H1 (cell line): ENCODE measurements at regions of chr3 and their contacts with region 1.

Region 1: GRCh38 chr3:9067352-9067975 is 104.2 kb upstream of the RAD18 start:
- DNase-seq: peak; percentile 31 to 65
- H3K4me3 ChIP-seq: no peak overlapping the region
- H3K27ac ChIP-seq: no peak overlapping the region
- H3K4me1 ChIP-seq: no peaks in the 10 kb centered on the region
- H3K27me3 ChIP-seq: no peaks in the 10 kb centered on the region
- CTCF ChIP-seq: peak; percentile 32 to 96 (median 94)
- EP300 ChIP-seq: no peak
- POLR2A ChIP-seq: no peak
- RAD21 ChIP-seq: peak; percentile 97

Region 2: DNA sequence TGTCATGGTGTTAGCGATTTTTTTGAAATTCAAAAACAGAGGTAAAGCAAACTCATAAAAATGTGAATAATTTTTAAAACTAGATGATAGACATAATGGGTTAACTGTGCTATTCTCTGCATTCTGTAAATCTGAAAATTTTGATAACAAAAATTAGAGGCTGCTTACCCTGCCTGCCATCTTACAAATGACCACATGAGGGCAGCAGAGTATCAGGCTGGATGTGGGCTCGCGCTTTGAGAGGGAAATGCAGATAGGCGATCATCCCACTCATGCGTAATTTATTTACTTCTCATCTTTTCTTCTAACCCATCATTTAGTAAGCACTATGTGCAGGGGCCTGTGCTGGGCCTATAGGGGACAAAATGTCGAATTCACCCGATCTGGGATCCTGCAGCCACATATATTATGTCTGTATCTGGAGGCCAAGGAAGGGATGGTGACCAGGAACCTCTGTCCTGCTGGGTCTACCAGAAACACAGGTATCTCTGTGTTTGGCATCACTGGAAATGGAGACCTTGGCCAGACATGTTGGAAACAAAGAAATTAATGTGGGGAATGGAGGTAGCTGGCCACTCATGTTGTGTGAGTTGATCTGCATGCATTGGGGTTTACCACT is 96.4 kb before region 1 on chr3:
- CTCF ChIA-PET with region 1: interaction called, 12 read pairs
- POLR2A ChIA-PET with region 1: no interaction called
- DNase-seq: peak in 1 of 2 experiments; percentile 83
- H3K4me3 ChIP-seq: no peak overlapping the region
- H3K27ac ChIP-seq: no peak overlapping the region
- H3K4me1 ChIP-seq: peaks cover 0 to 6% (median 3%) of the 10 kb centered on the region in 4 experiments; a peak in 4 of 7 replicates
- H3K27me3 ChIP-seq: peaks cover 0 to 2% (median 0%) of the 10 kb centered on the region in 4 experiments; a peak in 1 of 7 replicates
- CTCF ChIP-seq: peak; percentile 72 to 87 (median 83)
- EP300 ChIP-seq: no peak
- POLR2A ChIP-seq: no peak
- RAD21 ChIP-seq: peak; percentile 98

Region 3: DNA sequence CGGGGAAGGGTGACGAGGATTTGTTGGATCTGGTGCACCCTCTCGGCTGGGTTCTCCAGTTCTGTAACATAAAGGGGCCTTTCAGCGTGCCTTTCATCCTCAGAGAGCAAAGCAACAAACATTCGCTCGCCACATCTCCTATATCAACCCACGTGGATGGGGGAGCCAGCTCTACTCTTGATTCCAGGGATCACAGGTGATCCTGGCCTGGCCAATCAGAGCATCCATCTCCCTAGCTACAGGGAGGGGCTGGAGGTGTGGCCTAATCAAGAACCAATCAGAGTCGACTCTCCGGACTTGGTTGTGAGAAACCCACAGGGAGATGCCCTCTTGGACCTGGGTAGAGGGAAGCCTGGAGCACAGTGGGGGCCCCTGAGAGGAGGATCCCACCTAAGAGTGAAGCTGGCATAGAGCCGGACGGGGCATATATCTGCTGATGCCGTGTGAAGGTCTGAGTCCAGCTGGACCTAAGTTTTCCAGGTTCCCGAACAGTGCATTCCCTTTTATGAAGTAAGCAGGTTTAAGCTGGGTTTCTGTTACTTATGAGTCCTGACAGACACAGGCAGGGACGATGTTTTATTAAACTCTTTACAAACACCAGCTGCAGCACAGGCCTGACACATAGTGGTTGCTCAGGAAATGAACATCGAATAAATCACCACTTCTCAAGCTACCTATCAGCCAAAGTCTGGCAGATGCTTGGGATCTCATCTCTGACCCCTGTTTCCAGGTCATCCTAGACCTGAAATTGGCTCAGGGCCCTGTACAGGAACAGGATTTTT is 53.5 kb before region 1 on chr3:
- CTCF ChIA-PET with region 1: no interaction called
- POLR2A ChIA-PET with region 1: no interaction called
- DNase-seq: no peak
- H3K4me3 ChIP-seq: no peak overlapping the region
- H3K27ac ChIP-seq: no peak overlapping the region
- H3K4me1 ChIP-seq: no peaks in the 10 kb centered on the region
- H3K27me3 ChIP-seq: no peaks in the 10 kb centered on the region
- CTCF ChIP-seq: peak in 1 of 3 experiments; percentile 5; a peak in 1 of 4 replicates
- EP300 ChIP-seq: no peak
- POLR2A ChIP-seq: no peak
- RAD21 ChIP-seq: peak; percentile 28 to 41

Region 4: DNA sequence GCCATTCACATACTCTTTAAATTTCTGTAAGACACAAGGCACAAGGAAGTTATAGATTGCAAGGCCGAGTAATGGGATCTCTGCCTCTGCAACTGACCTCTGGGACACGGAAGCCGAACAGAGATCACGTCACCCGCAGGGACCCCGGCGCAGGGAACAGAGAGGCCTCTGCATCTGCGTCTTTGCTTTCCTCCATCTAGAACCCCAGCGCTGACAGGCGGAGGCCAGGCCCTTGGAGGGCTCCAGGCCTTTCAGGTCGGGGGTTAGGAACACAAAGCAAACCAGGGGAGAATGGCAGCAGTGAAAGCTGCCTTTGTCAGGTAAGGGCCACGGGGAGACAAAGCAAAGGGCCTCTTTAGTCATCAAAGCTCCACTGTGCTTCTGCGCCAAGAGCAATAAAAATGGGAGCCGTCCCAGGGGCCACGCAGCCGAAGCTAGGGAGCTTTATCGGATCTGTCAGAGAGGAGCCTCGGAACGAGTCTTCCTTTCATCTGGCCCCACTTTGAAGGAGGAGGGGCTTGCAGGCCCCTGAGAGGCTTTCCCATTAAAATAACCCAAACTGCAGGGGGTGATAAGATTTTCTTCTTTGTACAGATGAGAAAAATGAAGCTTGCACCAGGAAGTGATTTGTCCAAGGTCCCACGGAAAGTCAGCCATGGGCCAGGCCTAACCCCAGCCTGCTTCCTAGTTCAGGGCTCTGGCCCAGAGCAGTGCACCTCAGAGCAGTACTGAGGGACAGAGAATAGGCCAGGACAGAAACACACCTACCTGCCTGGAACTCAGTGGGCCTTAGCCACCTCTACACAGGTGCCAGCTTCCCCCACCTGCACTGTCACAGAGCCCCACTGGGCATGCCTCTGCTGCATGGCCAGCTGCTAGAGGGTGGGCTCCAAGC is 19.8 kb before region 1 on chr3:
- CTCF ChIA-PET with region 1: interaction called, 33 read pairs
- POLR2A ChIA-PET with region 1: no interaction called
- DNase-seq: no peak
- H3K4me3 ChIP-seq: no peak overlapping the region
- H3K27ac ChIP-seq: no peak overlapping the region
- H3K4me1 ChIP-seq: peaks cover 0 to 4% (median 0%) of the 10 kb centered on the region in 4 experiments; a peak in 2 of 7 replicates
- H3K27me3 ChIP-seq: no peaks in the 10 kb centered on the region
- CTCF ChIP-seq: no peak
- EP300 ChIP-seq: no peak
- POLR2A ChIP-seq: no peak
- RAD21 ChIP-seq: no peak

Region 5: DNA sequence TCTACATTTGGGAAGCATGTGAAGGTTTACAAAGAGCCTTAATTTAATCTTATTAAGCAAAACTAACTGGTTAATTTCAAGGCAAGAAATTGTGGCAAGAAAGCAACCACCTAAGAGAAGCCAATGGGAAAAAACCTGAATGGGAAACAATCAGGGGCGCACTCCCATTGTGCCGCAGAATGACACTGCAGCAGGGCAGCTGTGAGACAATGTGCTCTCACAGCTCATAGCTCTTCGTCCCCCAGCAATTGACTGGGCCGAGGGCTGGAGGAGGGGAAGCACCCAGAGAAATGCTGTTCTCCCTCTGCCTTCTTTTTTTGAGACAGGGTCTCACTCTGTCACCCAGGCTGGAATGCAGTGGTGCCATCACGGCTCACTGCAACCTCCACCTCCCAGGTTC is 10.9 kb before region 1 on chr3:
- CTCF ChIA-PET with region 1: interaction called, 33 read pairs
- POLR2A ChIA-PET with region 1: no interaction called
- DNase-seq: no peak
- H3K4me3 ChIP-seq: no peak overlapping the region
- H3K27ac ChIP-seq: no peak overlapping the region
- H3K4me1 ChIP-seq: 0 out of 7 replicates have a peak, but pooled peaks cover 0 to 2% (median 0%) of the 10 kb centered on the region in 4 experiments
- H3K27me3 ChIP-seq: no peaks in the 10 kb centered on the region
- CTCF ChIP-seq: no peak
- EP300 ChIP-seq: no peak
- POLR2A ChIP-seq: no peak
- RAD21 ChIP-seq: no peak

Region 6: GRCh38 chr3:9080163-9080562 is 12.7 kb after region 1 on chr3:
- CTCF ChIA-PET with region 1: interaction called, 12 read pairs
- POLR2A ChIA-PET with region 1: interaction called, 3 read pairs
- DNase-seq: no peak
- H3K4me3 ChIP-seq: no peak overlapping the region
- H3K27ac ChIP-seq: no peak overlapping the region
- H3K4me1 ChIP-seq: peaks cover 7 to 21% (median 17%) of the 10 kb centered on the region in 4 experiments
- H3K27me3 ChIP-seq: no peaks in the 10 kb centered on the region
- CTCF ChIP-seq: no peak
- EP300 ChIP-seq: no peak
- POLR2A ChIP-seq: no peak
- RAD21 ChIP-seq: no peak